Right ventricle myocardium inferior (tissue), 1 donor: ENCODE measurements at regions of chr13 and their contacts with region 1.

Region 1: DNA sequence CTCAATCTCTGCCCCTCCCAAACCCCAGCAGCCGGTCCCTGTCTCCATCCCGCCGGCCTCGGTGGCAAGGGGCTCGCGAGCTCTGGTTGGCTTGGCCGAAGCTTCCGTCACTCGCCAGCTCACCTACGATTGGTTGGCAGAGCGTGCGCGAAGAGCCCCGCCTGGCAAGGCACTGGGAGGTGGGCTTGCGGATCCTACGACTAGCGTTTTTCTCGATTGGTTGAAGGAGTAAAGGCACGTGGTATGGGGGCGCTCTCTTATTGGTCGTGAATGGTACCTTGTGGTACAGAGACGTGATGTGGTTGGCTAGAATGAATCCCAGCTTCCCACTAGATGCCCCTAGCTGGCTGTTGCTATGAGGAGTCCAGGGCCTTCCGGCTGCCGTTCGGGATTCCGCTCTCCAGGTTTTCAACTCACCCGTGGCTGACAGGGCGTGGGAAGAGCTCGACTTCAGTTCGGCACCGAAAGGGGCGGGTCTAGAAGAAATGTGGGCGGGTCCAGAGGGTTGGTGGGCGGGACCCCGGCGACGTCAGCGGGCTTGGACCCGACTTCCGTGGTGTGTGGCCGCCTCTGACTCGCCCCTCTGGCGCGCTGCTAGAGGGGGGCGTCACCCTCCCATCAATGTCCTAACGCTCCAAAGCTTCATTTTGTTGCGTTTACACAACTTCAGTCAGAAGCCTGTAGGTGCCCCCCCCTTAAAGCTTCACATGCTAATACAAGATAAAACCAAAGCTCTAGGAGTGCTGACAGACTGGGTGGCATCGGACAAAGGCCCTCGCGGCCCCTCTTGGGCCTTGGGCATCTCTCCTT is 847 bp upstream of the RAP2A start:
- DNase-seq: peak; percentile 98
- ATAC-seq: peak; percentile 94

Region 2: DNA sequence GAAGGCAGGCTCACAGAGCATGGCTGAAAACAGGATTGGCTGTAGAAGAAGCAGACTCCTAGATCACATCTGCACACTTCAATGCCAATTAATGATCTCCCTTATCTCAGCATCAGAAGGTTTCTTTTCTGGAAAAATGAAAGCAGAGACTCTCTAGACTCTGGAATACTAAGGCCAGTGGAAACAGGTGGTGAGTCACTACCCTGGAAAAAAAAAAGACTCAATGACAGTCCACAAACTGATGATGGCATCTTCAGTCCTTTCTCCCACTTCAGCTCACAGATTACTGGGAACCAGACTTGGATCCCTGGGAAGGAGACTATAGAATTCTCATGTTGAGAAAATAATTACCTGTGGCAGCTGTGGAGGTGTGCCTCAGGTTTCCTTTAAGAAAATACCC is 258.5 kb before region 1 on chr13:
- intact Hi-C with region 1: no loop called
- DNase-seq: no peak
- ATAC-seq: no peak

Region 3: DNA sequence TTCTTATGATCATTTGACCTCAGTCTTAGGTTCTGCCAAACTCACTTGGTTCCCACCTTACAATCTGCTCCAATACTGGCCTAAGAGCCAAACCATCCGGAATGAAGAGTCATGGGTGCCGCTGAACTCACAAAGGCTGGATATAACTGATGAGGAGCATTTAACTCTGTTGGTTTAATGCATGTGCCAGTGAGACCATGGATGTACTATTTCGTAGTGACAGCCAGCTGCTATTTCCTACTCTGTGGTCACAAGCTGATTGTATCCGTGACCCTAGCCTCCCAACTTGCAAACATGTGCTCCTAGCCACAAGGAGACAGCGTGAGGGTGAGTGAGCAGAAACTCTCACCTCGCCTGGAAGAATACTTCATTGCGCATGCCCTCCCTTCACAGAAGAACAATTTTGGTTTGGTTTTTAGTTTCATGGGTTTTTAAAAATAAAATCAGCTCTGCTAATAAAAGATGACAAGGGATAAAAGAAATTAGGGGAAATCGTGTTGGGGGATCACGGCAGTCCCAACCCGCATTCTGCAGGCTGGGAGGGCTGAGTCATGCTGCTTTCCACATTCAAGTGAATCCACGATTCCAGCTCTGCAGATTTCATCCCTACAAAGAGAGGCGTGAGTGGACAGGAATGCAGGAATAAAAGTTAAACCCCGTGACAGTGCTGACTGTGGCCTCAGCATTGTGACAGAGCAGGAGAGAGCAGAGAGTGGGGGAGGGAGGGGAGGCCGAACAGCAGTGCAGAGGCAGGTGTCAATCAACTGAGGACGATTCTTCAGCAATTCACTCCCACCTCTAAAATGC is 65.9 kb before region 1 on chr13:
- intact Hi-C with region 1: loop called (anchors 5 kb)
- DNase-seq: no peak
- ATAC-seq: no peak

Region 4: DNA sequence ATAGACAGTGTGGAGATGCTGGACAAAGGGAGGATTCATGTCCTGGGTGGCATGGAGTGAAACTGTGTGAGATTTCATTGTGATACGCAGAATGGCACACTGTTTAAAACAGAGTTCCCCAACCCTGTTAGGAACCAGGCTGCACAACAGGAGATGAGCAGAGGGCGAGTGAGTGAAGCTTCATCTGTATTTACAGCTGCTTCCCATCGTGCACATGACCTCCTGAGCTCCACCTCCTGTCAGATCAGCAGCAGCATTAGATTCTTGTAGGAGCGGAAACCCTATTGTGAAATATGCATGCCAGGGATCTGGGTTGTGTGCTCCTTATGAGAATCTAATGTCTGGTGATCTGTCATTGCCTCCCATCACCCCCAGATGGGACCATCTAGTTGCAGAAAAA is 73.4 kb after region 1 on chr13:
- intact Hi-C with region 1: no loop called
- DNase-seq: no peak
- ATAC-seq: no peak

Region 5: GRCh38 chr13:97809576-97809975 is 376.5 kb after region 1 on chr13:
- intact Hi-C with region 1: loop called (anchors 10 kb)
- DNase-seq: no peak
- ATAC-seq: no peak

Region 6: DNA sequence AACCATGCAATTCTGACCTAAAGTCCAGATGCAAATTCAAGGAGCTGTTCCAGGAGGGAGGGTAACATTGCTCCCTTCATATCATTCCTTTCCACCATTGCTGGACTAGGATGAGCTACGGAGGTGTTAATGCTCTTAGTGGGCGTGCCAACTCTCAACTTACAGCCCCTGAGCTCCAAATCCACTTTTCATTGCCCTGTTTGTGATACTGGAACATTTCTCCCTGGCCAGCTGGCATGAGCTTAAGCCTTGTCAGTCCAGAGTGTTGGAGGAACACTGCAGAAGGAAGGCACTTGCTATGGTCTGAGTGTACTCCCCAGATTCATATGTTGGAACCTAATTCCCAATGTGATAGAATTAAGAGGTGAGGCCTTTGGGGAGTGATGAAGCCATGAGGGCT is 639.4 kb after region 1 on chr13:
- intact Hi-C with region 1: no loop called
- DNase-seq: no peak
- ATAC-seq: no peak